CD4-positive, alpha-beta memory T cell (primary cell): ENCODE measurements at regions of chr4 and their contacts with region 1.

Region 1: GRCh38 chr4:164731827-164732474 is 22.0 kb upstream of the SMIM31 start:
- DNase-seq: peak in 4 of 5 donors; percentile 21 to 46 (median 34)
- H3K4me3 ChIP-seq: no peak overlapping the region
- H3K4me3 Mint-ChIP-seq: no peak overlapping the region
- H3K27ac ChIP-seq: no peak overlapping the region
- H3K27ac Mint-ChIP-seq: no peak overlapping the region
- H3K4me1 ChIP-seq: no peaks in the 10 kb centered on the region
- H3K4me1 Mint-ChIP-seq: peaks cover 0 to 2% (median 0%) of the 10 kb centered on the region in 4 donors
- H3K27me3 ChIP-seq: no peaks in the 10 kb centered on the region
- H3K27me3 Mint-ChIP-seq: peaks cover 2 to 3% of the 10 kb centered on the region in 2 donors

Region 2: GRCh38 chr4:163484906-163485305 is 1247.0 kb before region 1 on chr4:
- CTCF ChIA-PET with region 1: interaction called, 3 read pairs
- POLR2A ChIA-PET with region 1: no interaction called
- intact Hi-C with region 1: loop called (anchors 5 kb)
- DNase-seq: peak in 4 of 5 donors; percentile 29 to 36 (median 34)
- H3K4me3 ChIP-seq: no peak overlapping the region
- H3K4me3 Mint-ChIP-seq: no peak overlapping the region
- H3K27ac ChIP-seq: no peak overlapping the region
- H3K27ac Mint-ChIP-seq: no peak overlapping the region
- H3K4me1 ChIP-seq: no peaks in the 10 kb centered on the region
- H3K4me1 Mint-ChIP-seq: peaks cover 0 to 3% (median 0%) of the 10 kb centered on the region in 4 donors
- H3K27me3 ChIP-seq: no peaks in the 10 kb centered on the region
- H3K27me3 Mint-ChIP-seq: peaks cover 0 to 1% of the 10 kb centered on the region in 2 donors

Region 3: GRCh38 chr4:163663454-163664225 is 1068.3 kb before region 1 on chr4:
- CTCF ChIA-PET with region 1: no interaction called
- POLR2A ChIA-PET with region 1: no interaction called
- intact Hi-C with region 1: loop called (anchors 5 kb)
- DNase-seq: no peak
- H3K4me3 ChIP-seq: no peak overlapping the region
- H3K4me3 Mint-ChIP-seq: peak overlapping the region in 4 of 8 donors; percentile 10 to 45 (median 21)
- H3K27ac ChIP-seq: no peak overlapping the region
- H3K27ac Mint-ChIP-seq: peak overlapping the region in 4 of 7 donors; percentile 20 to 79 (median 44)
- H3K4me1 ChIP-seq: peaks cover 48% of the 10 kb centered on the region
- H3K4me1 Mint-ChIP-seq: peaks cover 38 to 53% (median 48%) of the 10 kb centered on the region in 4 donors
- H3K27me3 ChIP-seq: no peaks in the 10 kb centered on the region
- H3K27me3 Mint-ChIP-seq: no peaks in the 10 kb centered on the region

Region 4: GRCh38 chr4:163681208-163681821 is 1050.6 kb before region 1 on chr4:
- CTCF ChIA-PET with region 1: interaction called, 11 read pairs
- POLR2A ChIA-PET with region 1: no interaction called
- intact Hi-C with region 1: loop called (anchors 5 kb)
- DNase-seq: peak; percentile 28 to 66 (median 65)
- H3K4me3 ChIP-seq: no peak overlapping the region
- H3K4me3 Mint-ChIP-seq: no peak overlapping the region
- H3K27ac ChIP-seq: no peak overlapping the region
- H3K27ac Mint-ChIP-seq: no peak overlapping the region
- H3K4me1 ChIP-seq: no peaks in the 10 kb centered on the region
- H3K4me1 Mint-ChIP-seq: peaks cover 1 to 9% (median 4%) of the 10 kb centered on the region in 4 donors
- H3K27me3 ChIP-seq: no peaks in the 10 kb centered on the region
- H3K27me3 Mint-ChIP-seq: peaks cover 2 to 7% of the 10 kb centered on the region in 2 donors

Region 5: GRCh38 chr4:163755013-163755412 is 976.9 kb before region 1 on chr4:
- CTCF ChIA-PET with region 1: no interaction called
- POLR2A ChIA-PET with region 1: no interaction called
- intact Hi-C with region 1: loop called (anchors 10 kb)
- DNase-seq: peak in 4 of 5 donors; percentile 32 to 43 (median 38)
- H3K4me3 ChIP-seq: no peak overlapping the region
- H3K4me3 Mint-ChIP-seq: peak overlapping the region in 2 of 8 donors; percentile 29 to 39
- H3K27ac ChIP-seq: no peak overlapping the region
- H3K27ac Mint-ChIP-seq: no peak overlapping the region
- H3K4me1 ChIP-seq: no peaks in the 10 kb centered on the region
- H3K4me1 Mint-ChIP-seq: peaks cover 0 to 8% (median 3%) of the 10 kb centered on the region in 4 donors
- H3K27me3 ChIP-seq: no peaks in the 10 kb centered on the region
- H3K27me3 Mint-ChIP-seq: peaks cover 0 to 2% of the 10 kb centered on the region in 2 donors

Region 6: DNA sequence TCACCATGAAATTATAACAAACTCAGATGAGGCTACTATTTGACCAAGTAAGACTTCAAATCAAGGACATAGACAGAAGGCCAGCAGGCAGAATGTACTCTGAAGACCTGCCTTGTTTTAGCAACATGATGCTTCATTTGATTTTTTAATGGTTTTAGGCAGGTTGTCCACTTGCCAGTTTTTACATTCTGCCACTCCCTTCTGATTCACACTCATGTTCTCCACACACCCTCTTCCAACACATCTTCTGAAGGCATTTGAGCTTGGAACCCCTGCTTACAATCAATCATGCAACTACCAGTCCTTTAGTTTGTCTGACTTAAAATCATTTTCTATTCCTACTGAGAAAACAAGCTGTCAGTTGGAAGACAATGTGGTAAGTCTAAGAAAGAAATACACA is 93.0 kb before region 1 on chr4:
- CTCF ChIA-PET with region 1: no interaction called
- POLR2A ChIA-PET with region 1: no interaction called
- intact Hi-C with region 1: no loop called
- DNase-seq: no peak
- H3K4me3 ChIP-seq: no peak overlapping the region
- H3K4me3 Mint-ChIP-seq: no peak overlapping the region
- H3K27ac ChIP-seq: no peak overlapping the region
- H3K27ac Mint-ChIP-seq: no peak overlapping the region
- H3K4me1 ChIP-seq: no peaks in the 10 kb centered on the region
- H3K4me1 Mint-ChIP-seq: no peaks in the 10 kb centered on the region
- H3K27me3 ChIP-seq: no peaks in the 10 kb centered on the region
- H3K27me3 Mint-ChIP-seq: no peaks in the 10 kb centered on the region

Region 7: GRCh38 chr4:164716901-164717300 is 15.1 kb before region 1 on chr4:
- CTCF ChIA-PET with region 1: interaction called, 11 read pairs
- POLR2A ChIA-PET with region 1: no interaction called
- intact Hi-C with region 1: no loop called
- DNase-seq: no peak
- H3K4me3 ChIP-seq: no peak overlapping the region
- H3K4me3 Mint-ChIP-seq: no peak overlapping the region
- H3K27ac ChIP-seq: no peak overlapping the region
- H3K27ac Mint-ChIP-seq: no peak overlapping the region
- H3K4me1 ChIP-seq: no peaks in the 10 kb centered on the region
- H3K4me1 Mint-ChIP-seq: no peaks in the 10 kb centered on the region
- H3K27me3 ChIP-seq: no peaks in the 10 kb centered on the region
- H3K27me3 Mint-ChIP-seq: peaks cover 3 to 5% of the 10 kb centered on the region in 2 donors

Region 8: DNA sequence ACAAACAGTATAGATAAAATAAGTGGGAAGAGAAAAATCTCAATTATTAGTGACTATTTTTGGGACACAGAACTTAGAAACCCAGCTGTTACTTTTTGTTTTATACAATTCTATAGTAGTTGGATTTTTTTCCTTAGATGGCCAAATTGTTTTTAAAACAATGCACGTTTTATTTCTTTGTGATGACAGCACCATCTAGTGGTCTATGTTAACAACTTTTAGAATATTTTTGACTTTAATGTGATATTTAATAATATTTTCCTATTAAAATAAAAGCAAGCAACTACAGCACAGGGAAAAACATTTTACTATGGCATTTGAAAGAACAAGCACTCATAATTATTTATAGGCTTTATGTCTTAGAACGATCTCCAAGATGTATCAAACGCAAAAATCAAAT is 16.4 kb after region 1 on chr4:
- CTCF ChIA-PET with region 1: interaction called, 14 read pairs
- POLR2A ChIA-PET with region 1: no interaction called
- intact Hi-C with region 1: no loop called
- DNase-seq: peak in 2 of 5 donors; percentile 10
- H3K4me3 ChIP-seq: no peak overlapping the region
- H3K4me3 Mint-ChIP-seq: no peak overlapping the region
- H3K27ac ChIP-seq: no peak overlapping the region
- H3K27ac Mint-ChIP-seq: no peak overlapping the region
- H3K4me1 ChIP-seq: no peaks in the 10 kb centered on the region
- H3K4me1 Mint-ChIP-seq: no peaks in the 10 kb centered on the region
- H3K27me3 ChIP-seq: no peaks in the 10 kb centered on the region
- H3K27me3 Mint-ChIP-seq: peaks cover 3% of the 10 kb centered on the region in 2 donors